Gastrocnemius medialis (tissue), 4 donors: ENCODE measurements at regions of chr1 and their contacts with region 1.

Region 1: DNA sequence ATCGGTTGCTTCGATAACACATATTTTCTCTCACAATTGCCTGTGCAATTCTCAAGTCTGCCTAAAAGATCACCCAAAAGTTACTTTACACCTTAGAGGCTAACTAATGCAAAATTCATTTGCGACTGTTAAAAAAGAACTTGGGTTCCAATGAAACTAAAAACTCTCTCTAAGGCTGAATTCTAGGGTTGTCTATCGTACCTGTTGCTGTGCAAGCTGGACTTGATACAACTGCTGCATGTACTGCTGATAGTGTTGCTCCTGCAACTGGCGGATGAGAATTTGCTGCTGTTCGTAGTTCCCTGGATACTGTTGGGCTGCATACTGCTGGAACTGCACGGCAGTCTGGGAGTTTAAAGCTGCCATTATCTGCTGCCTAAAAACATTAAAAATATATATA is 27.6 kb downstream of the ACBD3 start:
- DNase-seq: no peak
- ATAC-seq: no peak
- H3K4me3 ChIP-seq: no peak overlapping the region
- H3K27ac ChIP-seq: no peak overlapping the region
- H3K4me1 ChIP-seq: no peaks in the 10 kb centered on the region
- H3K27me3 ChIP-seq: no peaks in the 10 kb centered on the region
- CTCF ChIP-seq: no peak
- POLR2A ChIP-seq: no peak

Region 2: GRCh38 chr1:226176870-226177269 is 17.9 kb after region 1 on chr1:
- in situ Hi-C with region 1: no loop called
- intact Hi-C with region 1: loop called (anchors 1 kb)
- DNase-seq: no peak
- ATAC-seq: no peak
- H3K4me3 ChIP-seq: no peak overlapping the region
- H3K27ac ChIP-seq: no peak overlapping the region
- H3K4me1 ChIP-seq: peaks cover 3 to 14% of the 10 kb centered on the region in 2 donors
- H3K27me3 ChIP-seq: no peaks in the 10 kb centered on the region
- CTCF ChIP-seq: no peak
- POLR2A ChIP-seq: no peak